Upper lobe of right lung (tissue), 1 donor: ENCODE measurements at regions of chr7 and their contacts with region 1.

Region 1: DNA sequence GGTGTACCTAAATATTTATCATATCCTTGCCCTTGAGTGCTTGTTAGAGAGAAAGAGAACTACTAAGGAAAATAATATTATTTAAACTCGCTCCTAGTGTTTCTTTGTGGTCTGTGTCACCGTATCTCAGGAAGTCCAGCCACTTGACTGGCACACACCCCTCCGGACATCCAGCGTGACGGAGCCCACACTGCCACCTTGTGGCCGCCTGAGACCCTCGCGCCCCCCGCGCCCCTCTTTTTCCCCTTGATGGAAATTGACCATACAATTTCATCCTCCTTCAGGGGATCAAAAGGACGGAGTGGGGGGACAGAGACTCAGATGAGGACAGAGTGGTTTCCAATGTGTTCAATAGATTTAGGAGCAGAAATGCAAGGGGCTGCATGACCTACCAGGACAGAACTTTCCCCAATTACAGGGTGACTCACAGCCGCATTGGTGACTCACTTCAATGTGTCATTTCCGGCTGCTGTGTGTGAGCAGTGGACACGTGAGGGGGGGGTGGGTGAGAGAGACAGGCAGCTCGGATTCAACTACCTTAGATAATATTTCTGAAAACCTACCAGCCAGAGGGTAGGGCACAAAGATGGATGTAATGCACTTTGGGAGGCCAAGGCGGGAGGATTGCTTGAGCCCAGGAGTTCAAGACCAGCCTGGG is 11.4 kb downstream of the SERPINE1 start:
- DNase-seq: peak; percentile 84
- ATAC-seq: peak; percentile 90
- H3K4me3 ChIP-seq: no peak overlapping the region
- H3K27ac ChIP-seq: peak overlapping the region; percentile 55
- H3K4me1 ChIP-seq: peaks cover 16% of the 10 kb centered on the region
- H3K27me3 ChIP-seq: no peaks in the 10 kb centered on the region
- CTCF ChIP-seq: peak; percentile 78

Region 2: GRCh38 chr7:101099969-101100781 is 38.2 kb before region 1 on chr7:
- intact Hi-C with region 1: loop called (anchors 5 kb)
- DNase-seq: peak; percentile 90
- ATAC-seq: peak; percentile 94
- H3K4me3 ChIP-seq: no peak overlapping the region
- H3K27ac ChIP-seq: peak overlapping the region; percentile 67
- H3K4me1 ChIP-seq: peaks cover 18% of the 10 kb centered on the region
- H3K27me3 ChIP-seq: no peaks in the 10 kb centered on the region
- CTCF ChIP-seq: no peak

Region 3: DNA sequence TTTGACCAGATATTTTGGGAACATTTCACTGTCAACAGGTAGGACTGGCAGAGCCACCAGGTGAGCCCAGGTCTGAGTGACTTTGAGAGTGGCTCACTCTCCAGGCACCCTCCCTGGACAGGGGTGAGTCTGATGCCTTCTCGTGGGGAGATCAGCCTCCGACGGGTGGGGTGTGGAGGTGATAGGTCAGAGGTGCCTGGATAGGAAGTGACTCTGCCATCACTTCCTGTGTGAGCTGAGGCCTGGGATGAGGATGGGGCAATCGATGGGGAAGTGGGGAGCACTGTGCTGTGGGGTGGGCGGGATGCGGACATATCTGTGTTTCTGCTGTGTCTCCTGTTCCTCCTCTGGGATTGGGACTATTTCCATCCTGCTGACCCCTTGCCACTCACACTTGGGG is 148.7 kb after region 1 on chr7:
- intact Hi-C with region 1: loop called (anchors 5 kb)
- DNase-seq: peak; percentile 72
- ATAC-seq: peak; percentile 85
- H3K4me3 ChIP-seq: no peak overlapping the region
- H3K27ac ChIP-seq: no peak overlapping the region
- H3K4me1 ChIP-seq: peaks cover 3% of the 10 kb centered on the region
- H3K27me3 ChIP-seq: peaks cover 15% of the 10 kb centered on the region
- CTCF ChIP-seq: no peak